ENCODE measurements at regions of chr19 and their contacts with region 1.

Region 1: GRCh38 chr19:16324384-16325160 is at the start of gene KLF2:
- DNase-seq: peak; percentile 63
- ATAC-seq: peak; percentile 89
- H3K4me3 ChIP-seq: peak within 1 kb of the TSS; percentile 59 to 79
- H3K27ac ChIP-seq: peak within 1 kb of the TSS; percentile 79
- H3K4me1 ChIP-seq: peaks cover 11 to 19% of the 10 kb centered on the region in 2 experiments
- H3K27me3 ChIP-seq: no peaks in the 10 kb centered on the region
- CTCF ChIP-seq: no peak
- POLR2A ChIP-seq: peak; percentile 60
- RAD21 ChIP-seq: no peak
- total RNA-seq, gene KLF2: 39.4 TPM

Region 2: GRCh38 chr19:16247353-16248182 is 77.0 kb before region 1 on chr19:
- CTCF ChIA-PET with region 1: interaction called, 8 read pairs
- POLR2A ChIA-PET with region 1: interaction called, 9 read pairs
- RAD21 ChIA-PET with region 1: no interaction called
- intact Hi-C with region 1: loop called (anchors 5 kb)
- DNase-seq: peak; percentile 68
- ATAC-seq: peak; percentile 100
- H3K4me3 ChIP-seq: no peak overlapping the region
- H3K27ac ChIP-seq: no peak overlapping the region
- H3K4me1 ChIP-seq: peaks cover 0 to 7% of the 10 kb centered on the region in 2 experiments; a peak in 2 of 4 replicates
- H3K27me3 ChIP-seq: no peaks in the 10 kb centered on the region
- CTCF ChIP-seq: peak; percentile 94 to 97 (median 94)
- POLR2A ChIP-seq: no peak
- RAD21 ChIP-seq: peak; percentile 100

Region 3: GRCh38 chr19:16266586-16266942 is 58.0 kb before region 1 on chr19:
- CTCF ChIA-PET with region 1: no interaction called
- POLR2A ChIA-PET with region 1: interaction called, 14 read pairs
- RAD21 ChIA-PET with region 1: no interaction called
- intact Hi-C with region 1: no loop called
- DNase-seq: no peak
- ATAC-seq: no peak
- H3K4me3 ChIP-seq: no peak overlapping the region
- H3K27ac ChIP-seq: no peak overlapping the region
- H3K4me1 ChIP-seq: no peaks in the 10 kb centered on the region
- H3K27me3 ChIP-seq: no peaks in the 10 kb centered on the region
- CTCF ChIP-seq: no peak
- POLR2A ChIP-seq: no peak
- RAD21 ChIP-seq: no peak

Region 4: DNA sequence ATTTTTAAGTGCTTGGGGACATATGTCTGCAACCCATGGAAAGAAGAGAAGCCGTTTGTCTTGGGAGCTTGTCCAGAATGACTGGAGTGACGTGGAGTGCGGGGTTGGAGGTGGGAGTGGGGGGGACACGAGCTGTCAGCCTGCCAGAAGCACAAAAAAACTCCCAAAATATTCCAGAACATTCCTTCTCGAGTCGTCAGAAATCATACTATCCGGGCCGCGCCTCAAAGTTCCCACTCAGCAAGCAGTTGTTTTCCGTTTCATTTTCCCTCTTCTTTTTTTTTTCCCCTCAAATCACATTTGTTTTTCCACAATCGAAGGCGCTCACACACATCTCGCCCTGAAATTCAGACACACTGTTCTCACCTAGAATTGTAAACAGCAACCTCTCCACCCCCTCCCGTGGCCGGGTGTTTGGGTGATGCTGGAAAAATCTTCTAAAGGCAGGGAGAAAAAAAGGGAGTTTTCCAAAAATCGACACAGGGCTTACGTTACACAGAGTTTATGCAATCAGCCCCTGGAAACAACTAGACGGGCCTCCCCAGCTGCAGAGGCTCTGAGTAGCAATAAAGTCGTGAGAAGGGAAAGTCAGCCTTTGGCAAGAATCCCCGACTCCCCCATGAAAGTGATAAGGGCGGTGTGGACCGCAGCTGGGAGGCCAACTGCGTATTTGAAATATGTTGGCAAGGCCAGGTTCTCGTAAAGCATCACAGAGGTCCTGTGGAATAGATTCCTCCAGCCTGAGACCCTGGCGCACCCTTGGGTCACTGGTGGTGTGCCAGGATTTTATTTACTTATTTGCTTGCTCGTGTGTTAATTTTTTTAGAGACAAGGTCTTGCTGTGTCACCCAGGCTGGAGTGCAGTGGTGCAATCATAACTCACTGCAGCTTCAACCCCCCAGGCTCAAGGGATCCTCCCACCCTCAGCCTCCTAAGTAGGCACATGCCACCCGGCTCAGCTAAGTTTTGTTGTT is 31.2 kb before region 1 on chr19:
- CTCF ChIA-PET with region 1: no interaction called
- POLR2A ChIA-PET with region 1: interaction called, 10 read pairs
- RAD21 ChIA-PET with region 1: no interaction called
- intact Hi-C with region 1: loop called (anchors 1 kb)
- DNase-seq: no peak
- ATAC-seq: no peak
- H3K4me3 ChIP-seq: no peak overlapping the region
- H3K27ac ChIP-seq: no peak overlapping the region
- H3K4me1 ChIP-seq: peaks cover 21 to 31% of the 10 kb centered on the region in 2 experiments
- H3K27me3 ChIP-seq: no peaks in the 10 kb centered on the region
- CTCF ChIP-seq: no peak
- POLR2A ChIP-seq: no peak
- RAD21 ChIP-seq: no peak

Region 5: DNA sequence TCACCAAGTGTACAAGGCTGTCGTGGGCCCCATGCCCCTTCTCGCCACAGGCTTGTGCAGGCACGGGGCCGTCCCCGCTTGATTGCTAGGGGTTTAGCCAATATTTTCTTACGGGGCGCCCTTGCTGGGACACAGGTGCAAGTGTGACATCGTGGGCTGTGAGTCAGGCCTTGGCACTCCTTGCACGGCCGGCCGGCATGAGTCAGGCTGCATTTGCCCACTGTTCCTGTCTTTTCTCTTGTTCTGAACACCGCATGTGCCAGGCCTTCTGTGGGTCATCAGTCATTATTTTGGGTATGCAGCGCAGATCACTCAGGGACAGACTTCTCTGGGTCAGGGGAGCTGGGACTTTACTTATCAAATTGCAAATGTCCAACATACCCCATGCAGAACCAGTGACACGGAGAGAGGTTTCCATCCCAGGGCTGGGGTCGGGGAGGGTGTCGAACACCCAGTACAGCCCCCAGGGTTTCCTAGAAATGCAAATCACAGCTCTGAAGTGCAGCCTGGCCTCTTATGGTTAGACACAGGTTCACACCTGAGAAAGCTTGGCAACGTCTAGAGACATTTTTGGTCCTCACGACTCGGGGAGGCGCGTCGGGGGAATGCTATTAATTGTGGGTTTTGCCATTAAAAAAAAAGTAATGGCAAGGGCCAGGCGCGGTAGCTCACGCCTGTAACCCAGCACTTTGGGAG is 22.4 kb before region 1 on chr19:
- CTCF ChIA-PET with region 1: no interaction called
- POLR2A ChIA-PET with region 1: interaction called, 14 read pairs
- RAD21 ChIA-PET with region 1: no interaction called
- intact Hi-C with region 1: loop called (anchors 1 kb)
- DNase-seq: peak; percentile 59
- ATAC-seq: peak; percentile 76
- H3K4me3 ChIP-seq: peak overlapping the region in 1 of 2 experiments; percentile 4; a peak in 1 of 4 replicates
- H3K27ac ChIP-seq: 0 out of 2 replicates have a peak overlapping the region, but pooled peaks have one; percentile 34
- H3K4me1 ChIP-seq: peaks cover 17 to 26% of the 10 kb centered on the region in 2 experiments
- H3K27me3 ChIP-seq: no peaks in the 10 kb centered on the region
- CTCF ChIP-seq: no peak
- POLR2A ChIP-seq: no peak
- RAD21 ChIP-seq: no peak

Region 6: GRCh38 chr19:16338470-16339360 is 14.1 kb after region 1 on chr19:
- CTCF ChIA-PET with region 1: interaction called, 6 read pairs
- POLR2A ChIA-PET with region 1: interaction called, 32 read pairs
- RAD21 ChIA-PET with region 1: no interaction called
- intact Hi-C with region 1: no loop called
- DNase-seq: peak; percentile 56
- ATAC-seq: peak; percentile 82
- H3K4me3 ChIP-seq: peak overlapping the region; percentile 1 to 38; a peak in 2 of 4 replicates
- H3K27ac ChIP-seq: peak overlapping the region; percentile 63
- H3K4me1 ChIP-seq: peaks cover 23 to 38% of the 10 kb centered on the region in 2 experiments
- H3K27me3 ChIP-seq: no peaks in the 10 kb centered on the region
- CTCF ChIP-seq: peak in 2 of 3 experiments; percentile 24 to 36; a peak in 3 of 6 replicates
- POLR2A ChIP-seq: no peak
- RAD21 ChIP-seq: no peak